Common myeloid progenitor, CD34-positive (primary cell): ENCODE measurements at regions of chrX and their contacts with region 1.

Region 1: DNA sequence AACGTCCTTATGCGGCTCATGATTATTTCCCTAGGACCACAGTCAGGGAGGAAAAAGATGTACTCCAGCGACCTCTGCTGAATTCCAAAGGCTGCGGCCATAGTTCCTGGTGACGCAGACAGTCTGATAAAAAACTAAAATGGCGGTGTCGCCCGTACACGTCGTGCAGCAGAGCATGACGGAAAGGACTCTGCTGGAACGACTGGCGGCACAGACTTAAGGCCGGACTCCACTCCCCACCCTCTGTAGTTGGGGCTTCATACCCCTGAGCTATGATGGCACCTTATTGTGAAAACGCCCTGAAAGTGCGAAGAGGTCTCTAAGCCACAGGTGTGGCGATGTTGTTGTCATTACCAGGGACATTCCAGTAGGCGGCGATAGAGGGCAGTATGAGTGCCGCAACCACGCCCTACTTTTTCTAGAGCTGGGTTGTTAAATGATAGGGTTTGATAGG is 90.0 kb upstream of the EDA2R start:
- DNase-seq: peak; percentile 77 to 81 (median 80)
- H3K4me3 ChIP-seq: peak overlapping the region; percentile 50 to 90 (median 69)
- H3K27ac ChIP-seq: peak overlapping the region; percentile 34 to 82
- H3K4me1 ChIP-seq: no peaks in the 10 kb centered on the region
- H3K27me3 ChIP-seq: no peaks in the 10 kb centered on the region

Region 2: DNA sequence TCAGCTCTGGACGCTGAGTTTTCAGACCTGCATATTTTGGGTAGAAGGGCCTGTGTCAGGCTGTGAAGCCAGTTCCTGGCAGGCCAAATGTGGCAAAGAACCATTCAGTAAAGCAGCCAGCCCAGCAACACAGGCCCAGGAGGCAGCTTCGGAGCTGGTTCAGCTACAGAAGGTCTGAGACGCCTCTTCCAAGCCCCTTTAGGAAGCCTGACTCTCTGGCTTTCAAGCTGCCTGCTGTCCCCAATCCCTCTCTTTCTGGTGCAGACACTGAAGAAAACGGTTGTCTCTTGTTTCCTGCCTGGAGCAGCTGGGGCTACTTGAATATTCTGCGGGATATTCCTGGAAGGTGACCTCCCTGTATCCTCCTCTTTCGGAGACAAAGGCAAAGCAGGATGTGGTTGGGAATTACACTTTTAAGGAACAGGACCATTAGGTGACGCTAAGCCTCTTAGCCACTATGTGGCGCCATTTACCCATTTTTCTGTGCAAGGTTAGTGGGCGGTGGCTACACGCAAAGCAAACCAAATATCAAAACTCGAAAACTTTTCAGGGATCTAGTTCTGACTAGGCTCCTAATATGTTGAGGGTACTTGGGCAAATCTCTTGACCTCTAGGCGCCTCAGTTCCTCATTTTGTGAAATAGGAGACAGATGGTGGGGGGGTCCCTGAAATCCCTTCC is 1147.0 kb before region 1 on chrX:
- CTCF ChIA-PET with region 1: interaction called, 13 read pairs
- POLR2A ChIA-PET with region 1: no interaction called
- DNase-seq: peak; percentile 59 to 81 (median 75)
- H3K4me3 ChIP-seq: peak overlapping the region in 1 of 7 experiments; percentile 28
- H3K27ac ChIP-seq: no peak overlapping the region
- H3K4me1 ChIP-seq: peaks cover 0 to 5% (median 2%) of the 10 kb centered on the region in 4 experiments
- H3K27me3 ChIP-seq: peaks cover 0 to 3% (median 0%) of the 10 kb centered on the region in 5 experiments